Endothelial cell of umbilical vein (primary cell): ENCODE measurements at regions of chr7 and their contacts with region 1.

Region 1: DNA sequence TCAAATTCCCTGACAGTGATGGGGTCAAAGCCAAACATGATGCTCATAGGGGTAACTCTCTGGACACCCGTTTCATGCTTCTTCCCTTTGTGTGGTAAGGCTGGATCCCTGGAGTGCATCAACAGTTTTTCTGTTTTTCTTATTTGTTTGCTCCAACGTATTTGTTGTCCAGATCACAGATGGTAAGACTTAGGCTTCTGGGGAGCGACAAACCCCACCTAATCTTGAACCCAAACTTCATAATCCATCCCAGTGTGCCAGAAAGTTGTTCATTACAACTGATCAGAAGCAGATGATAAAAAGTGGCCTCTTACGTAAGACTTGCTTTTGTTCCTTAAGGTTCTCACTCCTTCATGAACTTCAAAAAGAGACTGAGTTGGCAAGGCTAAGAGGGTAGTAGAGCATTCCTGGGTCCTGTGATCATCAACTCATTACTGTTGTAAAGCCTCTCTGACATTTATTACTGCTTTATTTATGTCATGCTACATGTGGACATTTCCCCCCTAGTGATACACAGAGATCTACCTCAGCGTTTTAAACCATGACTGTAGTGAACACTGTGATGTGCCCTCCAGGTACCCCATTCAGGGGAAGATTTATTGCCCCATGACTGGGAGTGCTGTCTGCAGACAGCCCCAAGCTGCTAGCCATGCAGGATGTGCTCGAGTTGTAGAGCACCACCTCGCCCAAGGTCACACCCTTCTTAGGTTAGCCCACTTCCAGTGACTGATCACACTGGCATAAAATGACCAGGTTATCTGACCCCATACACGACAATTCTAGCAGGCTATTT is 125.5 kb downstream of the CCDC71L start:
- DNase-seq: no peak
- H3K4me3 ChIP-seq: no peak overlapping the region
- H3K27ac ChIP-seq: no peak overlapping the region
- H3K4me1 ChIP-seq: peaks cover 34% of the 10 kb centered on the region
- H3K27me3 ChIP-seq: no peaks in the 10 kb centered on the region
- CTCF ChIP-seq: no peak
- POLR2A ChIP-seq: no peak

Region 2: GRCh38 chr7:106461993-106462859 is 73.2 kb before region 1 on chr7:
- CTCF ChIA-PET with region 1: interaction called, 26 read pairs
- POLR2A ChIA-PET with region 1: interaction called, 3 read pairs
- dilution Hi-C with region 1: no loop called
- intact Hi-C with region 1: loop called (anchors 1 kb)
- DNase-seq: peak; percentile 83
- H3K4me3 ChIP-seq: no peak overlapping the region
- H3K27ac ChIP-seq: peak overlapping the region; percentile 32
- H3K4me1 ChIP-seq: peaks cover 22% of the 10 kb centered on the region
- H3K27me3 ChIP-seq: no peaks in the 10 kb centered on the region
- CTCF ChIP-seq: peak; percentile 25 to 37
- POLR2A ChIP-seq: no peak

Region 3: GRCh38 chr7:106609416-106609815 is 74.0 kb after region 1 on chr7:
- CTCF ChIA-PET with region 1: no interaction called
- POLR2A ChIA-PET with region 1: interaction called, 3 read pairs
- dilution Hi-C with region 1: no loop called
- intact Hi-C with region 1: loop called (anchors 1 kb)
- DNase-seq: peak; percentile 88
- H3K4me3 ChIP-seq: no peak overlapping the region
- H3K27ac ChIP-seq: peak overlapping the region; percentile 88
- H3K4me1 ChIP-seq: peaks cover 20% of the 10 kb centered on the region
- H3K27me3 ChIP-seq: no peaks in the 10 kb centered on the region
- CTCF ChIP-seq: no peak
- POLR2A ChIP-seq: no peak

Region 4: DNA sequence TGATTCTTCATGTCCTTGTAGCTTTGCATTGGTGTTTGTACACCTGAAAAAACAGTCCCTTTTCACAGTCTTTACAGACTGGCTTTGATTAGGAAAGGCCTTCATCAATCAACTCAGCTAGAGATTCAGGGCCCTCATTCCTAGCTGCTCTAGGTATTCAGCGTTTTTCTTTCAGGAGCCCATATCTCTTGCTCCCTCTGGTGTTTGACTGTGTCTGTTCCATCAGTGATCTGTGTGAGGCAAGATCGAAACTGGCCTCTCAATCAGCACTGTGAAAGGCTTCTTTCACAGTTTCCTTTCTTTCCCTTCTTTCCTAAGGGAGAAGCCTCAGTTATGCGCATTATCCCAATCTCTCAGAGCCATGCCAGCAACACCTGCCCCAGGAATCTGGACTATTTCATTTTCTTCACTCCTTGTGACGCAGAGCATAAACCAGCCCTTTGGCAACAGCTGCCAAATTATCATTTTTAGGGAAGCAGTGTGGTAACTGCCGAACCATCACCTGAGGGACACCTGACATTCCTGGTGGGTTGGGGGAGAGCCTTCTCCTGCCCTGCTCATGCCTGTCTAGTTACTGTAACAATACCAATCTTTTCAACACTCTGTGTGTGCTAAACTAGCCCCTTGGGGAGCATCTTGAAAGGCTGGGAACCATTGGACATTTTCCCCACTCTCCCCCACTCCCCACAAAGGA is 201.2 kb after region 1 on chr7:
- CTCF ChIA-PET with region 1: interaction called, 26 read pairs
- POLR2A ChIA-PET with region 1: no interaction called
- dilution Hi-C with region 1: no loop called
- intact Hi-C with region 1: loop called (anchors 1 kb)
- DNase-seq: peak; percentile 84
- H3K4me3 ChIP-seq: no peak overlapping the region
- H3K27ac ChIP-seq: peak overlapping the region; percentile 37
- H3K4me1 ChIP-seq: peaks cover 18% of the 10 kb centered on the region
- H3K27me3 ChIP-seq: no peaks in the 10 kb centered on the region
- CTCF ChIP-seq: peak; percentile 65 to 74
- POLR2A ChIP-seq: no peak

Region 5: DNA sequence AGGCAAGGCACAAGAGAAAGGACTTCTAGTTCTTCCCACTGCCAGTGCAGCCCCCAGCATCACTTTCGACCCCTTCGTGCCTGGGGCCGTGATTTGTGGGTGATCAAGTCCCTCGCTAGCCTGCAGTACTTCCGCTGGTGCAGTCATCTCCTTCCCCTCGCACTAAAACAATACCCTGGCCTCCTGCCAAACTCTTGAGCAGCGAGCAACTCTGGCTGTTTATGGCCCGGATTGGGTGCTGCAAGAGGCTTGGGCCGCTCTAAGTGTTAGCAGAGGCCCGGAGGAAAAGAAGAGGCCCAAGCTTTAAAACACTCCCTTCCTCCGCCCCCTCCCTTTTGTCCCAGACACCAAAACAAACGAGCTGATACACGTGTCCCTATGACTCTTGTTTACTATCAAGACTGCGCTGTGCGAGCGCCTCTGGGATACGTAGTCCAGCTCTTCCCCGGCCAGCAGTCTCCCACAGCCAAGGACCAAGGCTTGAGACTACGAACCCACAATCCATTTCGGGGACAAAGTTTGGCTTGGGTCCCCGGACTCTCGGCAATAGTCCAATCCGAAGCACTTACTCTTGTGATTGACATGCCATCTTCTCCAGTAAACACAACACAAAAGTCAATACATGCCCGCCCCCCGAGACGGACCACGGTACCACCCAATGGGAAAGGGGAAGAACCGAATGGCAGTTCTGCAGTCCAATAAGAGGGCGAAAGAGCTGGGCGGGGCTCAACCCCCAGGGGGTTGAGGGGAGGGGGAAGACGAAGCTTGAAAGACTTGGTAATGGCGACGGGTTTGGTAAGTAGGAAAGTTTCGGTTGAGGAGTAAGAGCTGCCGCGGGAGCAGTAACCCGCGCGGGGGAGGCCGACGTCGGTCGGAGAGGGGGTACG is 633.0 kb after region 1 on chr7 and contains the start of gene HBP1:
- CTCF ChIA-PET with region 1: interaction called, 3 read pairs
- POLR2A ChIA-PET with region 1: interaction called, 3 read pairs
- dilution Hi-C with region 1: no loop called
- intact Hi-C with region 1: loop called (anchors 10 kb)
- DNase-seq: peak; percentile 100
- H3K4me3 ChIP-seq: peak within 1 kb of the TSS; percentile 81 to 97 (median 93)
- H3K27ac ChIP-seq: peak within 1 kb of the TSS; percentile 92
- H3K4me1 ChIP-seq: peaks cover 40% of the 10 kb centered on the region
- H3K27me3 ChIP-seq: no peaks in the 10 kb centered on the region
- CTCF ChIP-seq: no peak
- POLR2A ChIP-seq: peak; percentile 53
- total RNA-seq, gene HBP1: 50.1 and 63.4 TPM in 2 replicates